Posterior vena cava (tissue), 2 donors: ENCODE measurements at regions of chr2 and their contacts with region 1.

Region 1: GRCh38 chr2:188244383-188244782 is 47.3 kb upstream of the GULP1 start:
- DNase-seq: no peak

Region 2: DNA sequence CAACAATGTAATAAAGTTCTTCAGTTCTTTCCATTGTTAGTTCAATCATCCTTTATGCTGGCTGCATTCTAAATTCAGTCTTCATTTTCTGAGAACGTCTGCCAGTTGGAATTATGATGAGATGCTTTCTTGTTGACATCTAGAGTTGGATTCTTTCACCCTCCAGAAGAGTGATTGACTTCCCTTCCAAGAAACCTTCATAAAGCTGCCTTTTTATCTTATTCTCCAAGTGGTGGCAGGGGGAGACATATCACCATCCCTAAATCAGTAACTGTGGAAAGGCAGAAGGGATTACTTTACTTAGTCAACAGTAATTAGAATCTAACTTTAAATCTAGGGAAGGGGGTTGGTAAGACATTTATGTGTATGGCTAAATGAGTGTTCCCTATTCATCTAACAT is 39.6 kb before region 1 on chr2:
- intact Hi-C with region 1: no loop called
- DNase-seq: no peak

Region 3: GRCh38 chr2:188227713-188228112 is 16.7 kb before region 1 on chr2:
- intact Hi-C with region 1: no loop called
- DNase-seq: no peak

Region 4: GRCh38 chr2:188256420-188256819 is 12.0 kb after region 1 on chr2:
- intact Hi-C with region 1: no loop called
- DNase-seq: no peak

Region 5: GRCh38 chr2:188319830-188320229 is 75.4 kb after region 1 on chr2:
- intact Hi-C with region 1: loop called in 1 of 2 experiments (anchors 2 kb)
- DNase-seq: no peak